Naive thymus-derived CD4-positive, alpha-beta T cell (primary cell): ENCODE measurements at regions of chr3 and their contacts with region 1.

Region 1: GRCh38 chr3:183635431-183636220 is at the start of gene KLHL24:
- DNase-seq: peak; percentile 75 to 90 (median 88)
- ATAC-seq: peak; percentile 83
- H3K4me3 ChIP-seq: peak within 1 kb of the TSS; percentile 75
- H3K4me3 Mint-ChIP-seq: peak within 1 kb of the TSS; percentile 92 to 96 (median 94)
- H3K27ac ChIP-seq: peak within 1 kb of the TSS; percentile 91
- H3K27ac Mint-ChIP-seq: peak within 1 kb of the TSS; percentile 87 to 98 (median 95)
- H3K4me1 ChIP-seq: peaks cover 15 to 23% of the 10 kb centered on the region in 2 donors
- H3K4me1 Mint-ChIP-seq: peaks cover 18 to 44% (median 30%) of the 10 kb centered on the region in 7 donors
- H3K27me3 ChIP-seq: no peaks in the 10 kb centered on the region
- H3K27me3 Mint-ChIP-seq: no peaks in the 10 kb centered on the region
- total RNA-seq, gene KLHL24: 25.3 to 161 (median 129) TPM

Region 2: GRCh38 chr3:183427876-183428446 is 207.7 kb before region 1 on chr3:
- CTCF ChIA-PET with region 1: no interaction called
- POLR2A ChIA-PET with region 1: no interaction called
- intact Hi-C with region 1: loop called in 1 of 2 experiments (anchors 5 kb)
- DNase-seq: peak in 5 of 9 donors; percentile 3 to 55 (median 4)
- ATAC-seq: peak; percentile 34
- H3K4me3 ChIP-seq: peak overlapping the region; percentile 77
- H3K4me3 Mint-ChIP-seq: peak overlapping the region; percentile 66 to 90 (median 80)
- H3K27ac ChIP-seq: no peak overlapping the region
- H3K27ac Mint-ChIP-seq: peak overlapping the region in 2 of 9 donors; percentile 20 to 61
- H3K4me1 ChIP-seq: peaks cover 0 to 8% of the 10 kb centered on the region in 2 donors
- H3K4me1 Mint-ChIP-seq: peaks cover 0 to 28% (median 5%) of the 10 kb centered on the region in 7 donors
- H3K27me3 ChIP-seq: no peaks in the 10 kb centered on the region
- H3K27me3 Mint-ChIP-seq: peaks cover 0 to 29% (median 2%) of the 10 kb centered on the region in 5 donors

Region 3: DNA sequence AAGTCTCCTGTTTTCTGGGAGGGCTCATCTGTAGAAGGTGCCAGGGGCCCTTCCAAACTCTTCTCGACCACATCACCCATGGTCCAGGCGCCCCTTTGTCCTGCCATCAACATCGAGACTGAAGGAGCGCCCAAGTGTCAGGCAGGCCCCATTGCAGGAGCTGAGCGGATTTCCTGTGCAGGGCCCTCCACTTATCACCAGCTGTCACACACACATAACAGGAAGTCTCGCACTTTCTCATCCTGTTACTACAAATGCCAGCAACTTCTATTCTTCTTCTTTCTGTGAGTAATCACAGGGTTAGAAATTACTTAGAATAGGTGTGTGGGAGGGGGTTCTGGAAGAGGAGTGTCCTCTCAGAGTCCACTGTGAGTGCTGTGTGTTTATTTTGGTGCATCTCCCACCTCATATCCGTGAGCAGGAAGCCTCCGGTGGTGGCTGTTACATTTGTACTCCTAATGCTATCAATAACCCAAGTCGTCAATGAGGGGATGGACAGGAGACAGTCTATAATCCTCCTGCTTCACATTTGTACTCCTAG is 80.0 kb before region 1 on chr3 and contains the start of gene KLHL6:
- CTCF ChIA-PET with region 1: interaction called, 4 read pairs
- POLR2A ChIA-PET with region 1: interaction called, 24 read pairs
- intact Hi-C with region 1: loop called (anchors 1 kb)
- DNase-seq: peak; percentile 47 to 81 (median 74)
- ATAC-seq: peak; percentile 93
- H3K4me3 ChIP-seq: peak within 1 kb of the TSS; percentile 82
- H3K4me3 Mint-ChIP-seq: peak within 1 kb of the TSS; percentile 95 to 100 (median 98)
- H3K27ac ChIP-seq: peak within 1 kb of the TSS; percentile 78
- H3K27ac Mint-ChIP-seq: peak within 1 kb of the TSS; percentile 95 to 100 (median 98)
- H3K4me1 ChIP-seq: peaks cover 15 to 17% of the 10 kb centered on the region in 2 donors
- H3K4me1 Mint-ChIP-seq: peaks cover 46 to 58% (median 50%) of the 10 kb centered on the region in 7 donors
- H3K27me3 ChIP-seq: no peaks in the 10 kb centered on the region
- H3K27me3 Mint-ChIP-seq: no peaks in the 10 kb centered on the region
- total RNA-seq, gene KLHL6: 37.7 to 72.9 (median 41.5) TPM

Region 4: GRCh38 chr3:183766745-183767606 is 131.3 kb after region 1 on chr3:
- CTCF ChIA-PET with region 1: no interaction called
- POLR2A ChIA-PET with region 1: interaction called, 3 read pairs
- intact Hi-C with region 1: loop called (anchors 1 to 2 kb)
- DNase-seq: peak; percentile 41 to 72 (median 65)
- ATAC-seq: peak; percentile 96
- H3K4me3 ChIP-seq: no peak overlapping the region
- H3K4me3 Mint-ChIP-seq: no peak overlapping the region
- H3K27ac ChIP-seq: no peak overlapping the region
- H3K27ac Mint-ChIP-seq: peak overlapping the region in 4 of 9 donors; percentile 3 to 73 (median 40)
- H3K4me1 ChIP-seq: no peaks in the 10 kb centered on the region
- H3K4me1 Mint-ChIP-seq: peaks cover 5 to 18% (median 12%) of the 10 kb centered on the region in 7 donors
- H3K27me3 ChIP-seq: no peaks in the 10 kb centered on the region
- H3K27me3 Mint-ChIP-seq: no peaks in the 10 kb centered on the region

Region 5: GRCh38 chr3:183789826-183790225 is 154.2 kb after region 1 on chr3:
- CTCF ChIA-PET with region 1: no interaction called
- POLR2A ChIA-PET with region 1: no interaction called
- intact Hi-C with region 1: no loop called
- DNase-seq: no peak
- ATAC-seq: no peak
- H3K4me3 ChIP-seq: no peak overlapping the region
- H3K4me3 Mint-ChIP-seq: no peak overlapping the region
- H3K27ac ChIP-seq: no peak overlapping the region
- H3K27ac Mint-ChIP-seq: peak overlapping the region in 4 of 9 donors; percentile 0 to 49 (median 28)
- H3K4me1 ChIP-seq: no peaks in the 10 kb centered on the region
- H3K4me1 Mint-ChIP-seq: peaks cover 3 to 17% (median 11%) of the 10 kb centered on the region in 7 donors
- H3K27me3 ChIP-seq: no peaks in the 10 kb centered on the region
- H3K27me3 Mint-ChIP-seq: no peaks in the 10 kb centered on the region

Region 6: DNA sequence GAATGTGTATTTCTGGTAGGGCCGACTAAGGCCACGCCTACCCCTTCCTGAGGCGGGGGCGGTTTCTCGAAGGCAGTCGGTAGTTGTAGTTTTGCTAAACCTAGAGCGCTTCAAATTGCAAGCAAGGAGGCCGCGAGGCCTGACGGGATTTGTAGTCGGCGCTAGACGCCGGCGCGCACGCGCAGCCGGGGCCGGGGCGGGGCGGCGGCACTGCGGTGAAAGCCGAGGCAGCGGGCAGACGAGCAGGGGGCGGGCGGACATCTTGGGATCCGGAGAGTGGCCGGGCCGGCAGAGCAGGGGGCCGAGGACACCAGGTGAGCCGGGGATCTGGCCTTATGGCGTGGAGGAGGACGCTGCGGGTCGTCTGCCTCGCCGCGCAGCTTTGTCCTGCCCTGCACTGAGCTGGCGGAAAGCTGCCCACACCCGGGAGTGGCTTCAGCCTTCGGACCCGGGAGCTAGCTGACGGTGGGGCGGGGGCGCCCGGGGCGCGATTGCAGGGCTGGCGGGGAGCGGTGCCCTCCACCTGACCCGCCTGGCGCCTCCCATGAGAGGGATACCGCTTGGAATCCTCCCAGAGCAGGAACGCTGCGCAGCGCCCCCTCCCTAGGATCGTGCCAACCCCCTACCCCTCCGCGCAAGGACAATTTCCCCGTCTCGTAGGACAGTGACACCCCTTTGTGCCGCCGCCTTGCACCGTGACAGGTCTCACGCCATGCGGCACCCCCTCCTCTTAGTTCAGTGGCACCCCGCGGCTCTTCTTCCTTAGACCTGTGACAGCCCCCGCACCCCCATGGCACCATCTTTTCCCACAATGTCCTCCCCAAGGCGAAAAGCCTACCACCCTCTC is 539.2 kb after region 1 on chr3 and contains the start of gene AP2M1:
- CTCF ChIA-PET with region 1: no interaction called
- POLR2A ChIA-PET with region 1: no interaction called
- intact Hi-C with region 1: loop called (anchors 2 to 10 kb)
- DNase-seq: peak; percentile 98 to 99 (median 98)
- ATAC-seq: peak; percentile 98
- H3K4me3 ChIP-seq: peak within 1 kb of the TSS; percentile 82
- H3K4me3 Mint-ChIP-seq: peak within 1 kb of the TSS; percentile 89 to 98 (median 96)
- H3K27ac ChIP-seq: peak within 1 kb of the TSS; percentile 95
- H3K27ac Mint-ChIP-seq: peak within 1 kb of the TSS; percentile 75 to 94 (median 90)
- H3K4me1 ChIP-seq: peaks cover 18 to 20% of the 10 kb centered on the region in 2 donors
- H3K4me1 Mint-ChIP-seq: peaks cover 14 to 46% (median 38%) of the 10 kb centered on the region in 7 donors
- H3K27me3 ChIP-seq: no peaks in the 10 kb centered on the region
- H3K27me3 Mint-ChIP-seq: no peaks in the 10 kb centered on the region
- total RNA-seq, gene AP2M1: 111 to 217 (median 185) TPM

Region 7: GRCh38 chr3:184811999-184812661 is 1176.5 kb after region 1 on chr3 and contains the start of gene VPS8:
- CTCF ChIA-PET with region 1: no interaction called
- POLR2A ChIA-PET with region 1: no interaction called
- intact Hi-C with region 1: loop called (anchors 5 to 10 kb)
- DNase-seq: peak; percentile 92 to 97 (median 96)
- ATAC-seq: peak; percentile 97
- H3K4me3 ChIP-seq: peak within 1 kb of the TSS; percentile 94
- H3K4me3 Mint-ChIP-seq: peak within 1 kb of the TSS; percentile 87 to 99 (median 96)
- H3K27ac ChIP-seq: peak within 1 kb of the TSS; percentile 88
- H3K27ac Mint-ChIP-seq: peak within 1 kb of the TSS; percentile 93 to 98 (median 97)
- H3K4me1 ChIP-seq: peaks cover 15 to 44% of the 10 kb centered on the region in 2 donors
- H3K4me1 Mint-ChIP-seq: peaks cover 27 to 59% (median 57%) of the 10 kb centered on the region in 7 donors
- H3K27me3 ChIP-seq: no peaks in the 10 kb centered on the region
- H3K27me3 Mint-ChIP-seq: peaks cover 0 to 4% (median 0%) of the 10 kb centered on the region in 5 donors
- total RNA-seq, gene VPS8: 77.9 to 119 (median 106) TPM

Region 8: DNA sequence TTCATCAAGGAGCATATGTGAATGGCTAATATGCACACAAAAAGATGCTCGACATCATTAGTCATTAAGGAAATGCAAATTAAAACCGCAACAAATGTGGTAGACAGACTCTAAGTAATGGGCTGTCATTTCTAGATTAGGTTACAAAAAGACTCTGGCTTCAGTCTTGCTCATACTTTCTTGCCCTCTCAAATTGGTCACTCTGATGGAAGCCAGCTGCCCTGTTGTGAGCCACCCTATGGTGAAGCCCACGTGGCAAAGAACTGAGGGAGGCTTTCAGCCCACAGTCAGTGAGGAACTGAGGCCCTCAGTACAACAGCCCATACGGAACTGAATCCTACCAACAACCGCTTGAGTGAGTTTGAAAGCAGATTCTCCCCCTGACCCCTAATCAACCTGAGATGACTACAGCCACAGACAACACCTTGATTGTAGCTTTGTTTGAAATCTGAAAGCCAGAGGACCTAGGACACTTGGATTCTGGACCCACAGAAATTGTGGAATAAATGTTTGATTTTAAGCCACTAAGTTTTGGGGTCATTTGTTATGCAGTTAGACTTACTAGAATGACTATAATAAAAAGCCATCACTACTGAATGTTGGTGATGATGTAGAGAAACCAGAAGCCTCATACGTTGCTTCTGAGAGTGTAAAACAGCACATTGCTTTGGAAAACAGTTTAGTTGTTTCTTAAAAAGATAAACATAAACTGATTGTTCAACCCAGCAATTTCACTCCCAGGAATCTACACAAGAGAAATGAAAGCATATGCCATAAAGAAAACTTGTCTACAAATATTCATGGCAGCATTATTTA is 1572.5 kb after region 1 on chr3:
- CTCF ChIA-PET with region 1: no interaction called
- POLR2A ChIA-PET with region 1: no interaction called
- intact Hi-C with region 1: no loop called
- DNase-seq: no peak
- ATAC-seq: no peak
- H3K4me3 ChIP-seq: no peak overlapping the region
- H3K4me3 Mint-ChIP-seq: no peak overlapping the region
- H3K27ac ChIP-seq: no peak overlapping the region
- H3K27ac Mint-ChIP-seq: no peak overlapping the region
- H3K4me1 ChIP-seq: no peaks in the 10 kb centered on the region
- H3K4me1 Mint-ChIP-seq: no peaks in the 10 kb centered on the region
- H3K27me3 ChIP-seq: no peaks in the 10 kb centered on the region
- H3K27me3 Mint-ChIP-seq: no peaks in the 10 kb centered on the region